T-cell (primary cell): ENCODE measurements at regions of chr6 and their contacts with region 1.

Region 1: DNA sequence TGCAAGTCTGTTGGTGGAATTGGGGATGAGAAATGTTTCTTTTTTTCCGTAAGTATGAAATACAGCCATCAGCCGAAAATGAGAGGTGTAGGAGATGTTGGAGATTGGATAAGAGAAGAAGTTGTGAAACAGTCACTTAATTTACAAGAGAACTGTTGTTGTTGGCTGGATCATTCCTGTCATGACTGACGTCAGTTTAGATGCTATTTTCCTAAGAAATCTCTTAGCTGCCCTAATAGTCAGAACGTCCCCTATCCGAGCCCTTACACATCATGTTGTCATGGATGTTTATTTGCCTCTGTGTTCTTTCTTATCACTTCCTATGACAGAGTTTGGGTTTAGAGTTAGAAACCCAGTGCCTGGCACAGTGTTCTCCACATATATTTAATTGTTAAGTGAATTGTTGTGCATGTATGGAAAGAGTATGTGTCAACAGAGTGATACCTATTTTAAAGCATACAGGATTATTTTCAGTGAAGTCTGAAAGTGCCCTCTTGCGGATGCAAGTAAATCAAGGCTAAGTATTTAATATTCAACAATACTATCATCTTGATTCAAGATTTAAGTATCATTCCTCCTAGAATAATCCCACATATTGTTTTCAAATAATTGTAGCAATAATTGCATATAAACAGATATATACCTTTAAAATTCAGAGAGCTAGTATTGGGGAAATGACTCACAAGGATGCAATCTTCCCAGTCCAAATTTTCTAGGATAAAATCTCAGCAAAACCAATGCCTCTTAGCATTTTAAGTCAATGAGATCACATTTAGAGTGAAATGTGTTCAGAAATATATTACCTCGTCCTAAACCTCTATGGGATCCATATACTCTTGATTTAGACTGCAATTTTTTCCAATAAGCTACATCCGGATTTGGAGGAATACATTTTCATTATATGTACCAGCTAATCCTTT is 309.9 kb upstream of the NOX3 start:
- DNase-seq: no peak
- ATAC-seq: no peak
- H3K4me3 ChIP-seq: no peak overlapping the region
- H3K4me3 Mint-ChIP-seq: no peak overlapping the region
- H3K27ac ChIP-seq: no peak overlapping the region
- H3K27ac Mint-ChIP-seq: no peak overlapping the region
- H3K4me1 ChIP-seq: no peaks in the 10 kb centered on the region
- H3K4me1 Mint-ChIP-seq: no peaks in the 10 kb centered on the region
- H3K27me3 ChIP-seq: no peaks in the 10 kb centered on the region
- H3K27me3 Mint-ChIP-seq: no peaks in the 10 kb centered on the region

Region 2: GRCh38 chr6:155915651-155916050 is 150.1 kb after region 1 on chr6:
- CTCF ChIA-PET with region 1: no interaction called
- POLR2A ChIA-PET with region 1: interaction called in 1 of 2 experiments, 10 read pairs
- DNase-seq: no peak
- ATAC-seq: no peak
- H3K4me3 ChIP-seq: no peak overlapping the region
- H3K4me3 Mint-ChIP-seq: no peak overlapping the region
- H3K27ac ChIP-seq: no peak overlapping the region
- H3K27ac Mint-ChIP-seq: no peak overlapping the region
- H3K4me1 ChIP-seq: no peaks in the 10 kb centered on the region
- H3K4me1 Mint-ChIP-seq: no peaks in the 10 kb centered on the region
- H3K27me3 ChIP-seq: no peaks in the 10 kb centered on the region
- H3K27me3 Mint-ChIP-seq: peaks cover 0 to 4% of the 10 kb centered on the region in 2 donors